Panc1 (cell line): ENCODE measurements at regions of chr14 and their contacts with region 1.

Region 1: GRCh38 chr14:73503648-73504047 is 12.9 kb downstream of the RIOX1 start:
- DNase-seq: no peak
- ATAC-seq: no peak
- H3K4me3 ChIP-seq: no peak overlapping the region
- H3K27ac ChIP-seq: no peak overlapping the region
- H3K4me1 ChIP-seq: no peaks in the 10 kb centered on the region
- H3K27me3 ChIP-seq: no peaks in the 10 kb centered on the region
- CTCF ChIP-seq: no peak

Region 2: GRCh38 chr14:73269729-73270531 is 233.7 kb before region 1 on chr14:
- CTCF ChIA-PET with region 1: no interaction called
- POLR2A ChIA-PET with region 1: interaction called, 10 read pairs
- in situ Hi-C with region 1: no loop called
- intact Hi-C with region 1: no loop called
- DNase-seq: no peak
- ATAC-seq: no peak
- H3K4me3 ChIP-seq: no peak overlapping the region
- H3K27ac ChIP-seq: no peak overlapping the region
- H3K4me1 ChIP-seq: no peaks in the 10 kb centered on the region
- H3K27me3 ChIP-seq: no peaks in the 10 kb centered on the region
- CTCF ChIP-seq: no peak

Region 3: GRCh38 chr14:73443758-73444157 is 59.9 kb before region 1 on chr14:
- CTCF ChIA-PET with region 1: interaction called, 10 read pairs
- POLR2A ChIA-PET with region 1: no interaction called
- in situ Hi-C with region 1: no loop called
- intact Hi-C with region 1: no loop called
- DNase-seq: no peak
- ATAC-seq: no peak
- H3K4me3 ChIP-seq: no peak overlapping the region
- H3K27ac ChIP-seq: no peak overlapping the region
- H3K4me1 ChIP-seq: no peaks in the 10 kb centered on the region
- H3K27me3 ChIP-seq: no peaks in the 10 kb centered on the region
- CTCF ChIP-seq: no peak

Region 4: GRCh38 chr14:73633116-73634010 is 129.7 kb after region 1 on chr14:
- CTCF ChIA-PET with region 1: interaction called, 3 read pairs
- POLR2A ChIA-PET with region 1: no interaction called
- in situ Hi-C with region 1: no loop called
- intact Hi-C with region 1: loop called (anchors 5 kb)
- DNase-seq: peak; percentile 53
- ATAC-seq: peak; percentile 90
- H3K4me3 ChIP-seq: peak overlapping the region; percentile 41 to 53
- H3K27ac ChIP-seq: peak overlapping the region; percentile 59
- H3K4me1 ChIP-seq: no peaks in the 10 kb centered on the region
- H3K27me3 ChIP-seq: no peaks in the 10 kb centered on the region
- CTCF ChIP-seq: peak; percentile 88